ENCODE measurements at regions of chr19 and their contacts with region 1.

Region 1: DNA sequence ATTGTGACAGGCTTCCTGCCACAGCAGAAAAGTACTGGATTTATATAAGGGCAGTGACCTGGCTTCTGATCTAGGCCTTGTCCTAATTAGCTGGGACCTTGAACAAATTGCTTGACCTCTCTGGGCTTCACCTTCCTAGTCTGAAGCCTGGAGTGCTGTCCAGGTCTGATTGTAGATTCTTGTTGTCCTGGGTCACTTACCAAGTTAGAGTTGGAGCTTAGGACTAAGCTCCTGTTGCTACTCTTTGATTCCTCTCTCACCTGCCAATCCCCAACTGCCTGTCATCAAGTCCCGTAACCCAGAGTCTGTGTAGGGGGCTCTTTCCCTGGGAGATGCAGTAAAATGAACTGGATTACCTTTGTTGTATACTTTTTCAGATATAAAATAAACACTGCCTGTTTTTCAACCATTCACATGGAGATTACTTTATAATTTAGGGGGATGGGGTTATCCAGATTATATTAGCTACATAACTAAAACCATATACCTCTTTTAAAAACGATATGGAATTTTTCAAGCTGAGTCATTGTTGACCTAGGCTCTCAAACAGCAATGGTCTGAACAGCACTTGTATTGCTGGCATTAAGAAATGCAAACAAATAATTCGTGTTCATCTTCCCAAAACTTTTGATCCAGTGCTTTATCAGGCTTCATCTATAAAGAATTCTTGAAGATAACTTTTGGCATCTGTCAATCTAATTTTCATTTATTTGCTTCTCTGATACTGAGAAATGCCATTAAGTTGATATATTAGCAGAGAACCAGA is 5.8 kb downstream of the ARHGAP35 start:
- DNase-seq: no peak
- ATAC-seq: no peak
- H3K4me3 ChIP-seq: no peak overlapping the region
- H3K27ac ChIP-seq: no peak overlapping the region
- H3K4me1 ChIP-seq: peaks cover 2 to 13% of the 10 kb centered on the region in 2 donors
- H3K27me3 ChIP-seq: no peaks in the 10 kb centered on the region

Region 2: GRCh38 chr19:46840136-46840942 is 26.2 kb before region 1 on chr19:
- intact Hi-C with region 1: no loop called
- DNase-seq: no peak
- ATAC-seq: peak; percentile 85
- H3K4me3 ChIP-seq: no peak overlapping the region
- H3K27ac ChIP-seq: no peak overlapping the region
- H3K4me1 ChIP-seq: no peaks in the 10 kb centered on the region
- H3K27me3 ChIP-seq: no peaks in the 10 kb centered on the region

Region 3: GRCh38 chr19:46904114-46905060 is 37.8 kb after region 1 on chr19:
- intact Hi-C with region 1: loop called in 1 of 2 experiments (anchors 5 kb)
- DNase-seq: peak in 1 of 2 donors; percentile 60
- ATAC-seq: no peak
- H3K4me3 ChIP-seq: no peak overlapping the region
- H3K27ac ChIP-seq: no peak overlapping the region
- H3K4me1 ChIP-seq: peaks cover 3 to 10% of the 10 kb centered on the region in 2 donors
- H3K27me3 ChIP-seq: no peaks in the 10 kb centered on the region

Region 4: GRCh38 chr19:46990991-46991676 is 124.6 kb after region 1 on chr19:
- intact Hi-C with region 1: no loop called
- DNase-seq: peak; percentile 87 to 93
- ATAC-seq: peak; percentile 86
- H3K4me3 ChIP-seq: no peak overlapping the region
- H3K27ac ChIP-seq: peak overlapping the region in 1 of 2 donors; percentile 49
- H3K4me1 ChIP-seq: no peaks in the 10 kb centered on the region
- H3K27me3 ChIP-seq: no peaks in the 10 kb centered on the region

Region 5: DNA sequence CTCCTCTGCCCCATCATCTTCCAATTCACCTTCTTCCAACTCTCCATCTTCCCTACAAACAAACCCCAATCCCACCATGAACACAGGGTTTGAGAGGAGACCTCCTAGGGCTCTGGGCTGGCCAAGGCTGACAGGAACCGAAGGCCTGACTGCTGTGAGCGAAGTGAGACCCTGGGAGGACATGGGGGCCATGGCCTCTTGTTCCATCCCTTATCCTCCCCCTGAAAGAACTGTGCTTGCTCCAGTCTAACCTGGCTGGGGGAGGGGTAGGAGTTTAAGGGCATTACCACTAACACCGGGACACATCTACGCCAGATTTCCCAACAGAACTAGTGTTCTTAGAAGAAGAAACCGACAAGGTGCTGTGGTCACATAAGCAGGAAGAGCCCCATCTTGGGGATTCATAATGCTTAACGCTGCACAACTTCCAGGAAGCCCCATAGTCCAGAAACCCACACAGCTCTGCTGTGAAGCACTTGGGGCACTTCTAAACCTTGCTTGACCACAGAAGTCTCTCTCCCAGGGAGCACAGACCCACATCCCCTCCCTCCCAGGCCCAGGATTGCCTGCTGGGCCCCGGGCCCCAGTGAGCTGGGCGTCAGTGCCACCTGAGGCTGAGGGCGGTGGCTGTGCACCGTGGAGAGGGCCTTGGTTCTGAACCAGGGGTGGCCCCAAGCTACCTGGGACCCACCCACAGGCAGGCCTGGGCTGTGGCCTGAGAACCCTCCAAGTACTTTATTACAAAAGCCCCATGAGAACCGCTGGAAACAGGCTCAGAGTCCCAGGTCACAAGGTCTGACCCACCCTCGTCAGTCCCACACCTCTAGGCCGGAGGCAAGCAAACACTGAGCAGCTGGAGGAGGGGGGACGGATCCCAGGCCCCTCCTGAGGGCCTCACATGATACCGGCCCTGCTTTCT is 228.2 kb after region 1 on chr19:
- intact Hi-C with region 1: no loop called
- DNase-seq: no peak
- ATAC-seq: no peak
- H3K4me3 ChIP-seq: no peak overlapping the region
- H3K27ac ChIP-seq: peak overlapping the region in 1 of 2 donors; percentile 13
- H3K4me1 ChIP-seq: no peaks in the 10 kb centered on the region
- H3K27me3 ChIP-seq: no peaks in the 10 kb centered on the region

Measured in aorta (tissue), 5 donors.